CD8-positive, alpha-beta T cell (primary cell): ENCODE measurements at regions of chr17 and their contacts with region 1.

Region 1: DNA sequence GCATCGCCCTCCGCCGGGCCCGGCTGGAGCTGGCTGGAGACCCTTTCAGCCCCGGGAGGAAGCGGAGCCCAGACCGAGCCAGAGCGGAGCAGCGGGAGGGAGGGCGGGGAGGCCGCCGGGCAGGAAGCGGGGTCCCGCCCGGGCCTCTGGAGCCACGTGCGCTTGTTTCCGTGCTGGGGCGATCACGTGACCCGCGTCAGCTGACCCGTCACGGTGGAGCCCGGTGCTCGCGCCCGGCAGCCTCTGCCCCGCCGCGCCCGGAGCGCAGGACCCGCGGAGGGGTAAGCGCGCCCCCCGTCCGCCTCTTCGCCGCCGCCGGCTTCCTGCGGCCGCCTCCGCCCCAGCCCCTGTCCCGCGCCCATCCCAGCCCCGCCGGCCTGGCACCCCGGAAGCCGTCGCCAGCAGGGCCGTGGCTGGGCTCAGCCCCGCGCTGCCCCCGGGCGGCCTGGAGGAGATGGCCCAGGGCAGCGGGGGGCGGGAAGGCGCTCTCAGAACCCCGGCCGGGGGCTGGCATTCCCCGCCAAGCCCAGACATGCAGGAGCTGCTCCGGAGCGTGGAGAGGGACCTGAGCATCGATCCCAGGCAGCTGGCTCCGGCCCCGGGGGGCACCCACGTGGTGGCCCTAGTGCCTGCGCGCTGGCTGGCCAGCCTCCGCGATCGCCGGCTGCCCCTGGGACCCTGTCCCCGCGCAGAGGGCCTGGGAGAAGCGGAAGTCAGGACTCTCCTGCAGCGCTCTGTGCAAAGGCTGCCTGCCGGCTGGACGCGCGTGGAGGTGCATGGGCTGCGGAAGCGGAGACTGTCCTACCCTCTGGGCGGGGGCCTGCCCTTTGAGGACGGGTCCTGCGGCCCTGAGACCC is at the start of gene WDR81:
- DNase-seq: peak; percentile 57 to 94 (median 86)
- ATAC-seq: peak; percentile 71
- H3K4me3 ChIP-seq: peak within 1 kb of the TSS; percentile 57 to 62
- H3K4me3 Mint-ChIP-seq: peak within 1 kb of the TSS; percentile 79
- H3K27ac ChIP-seq: peak within 1 kb of the TSS; percentile 57 to 75
- H3K27ac Mint-ChIP-seq: peak within 1 kb of the TSS; percentile 83
- H3K4me1 ChIP-seq: peaks cover 52% of the 10 kb centered on the region
- H3K4me1 Mint-ChIP-seq: peaks cover 39% of the 10 kb centered on the region
- H3K27me3 ChIP-seq: no peaks in the 10 kb centered on the region
- H3K27me3 Mint-ChIP-seq: no peaks in the 10 kb centered on the region
- CTCF ChIP-seq: no peak
- total RNA-seq, gene WDR81: 18.9 to 20.4 TPM

Region 2: GRCh38 chr17:1648963-1649843 is 75.5 kb before region 1 on chr17:
- CTCF ChIA-PET with region 1: interaction called, 4 read pairs
- POLR2A ChIA-PET with region 1: no interaction called
- intact Hi-C with region 1: loop called in 1 of 2 experiments (anchors 1 kb)
- DNase-seq: peak; percentile 90 to 98 (median 93)
- ATAC-seq: peak; percentile 76
- H3K4me3 ChIP-seq: peak overlapping the region; percentile 34 to 70
- H3K4me3 Mint-ChIP-seq: peak overlapping the region; percentile 74
- H3K27ac ChIP-seq: peak overlapping the region in 1 of 2 experiments; percentile 44
- H3K27ac Mint-ChIP-seq: peak overlapping the region; percentile 49
- H3K4me1 ChIP-seq: peaks cover 16% of the 10 kb centered on the region
- H3K4me1 Mint-ChIP-seq: peaks cover 14% of the 10 kb centered on the region
- H3K27me3 ChIP-seq: no peaks in the 10 kb centered on the region
- H3K27me3 Mint-ChIP-seq: no peaks in the 10 kb centered on the region
- CTCF ChIP-seq: peak; percentile 71

Region 3: DNA sequence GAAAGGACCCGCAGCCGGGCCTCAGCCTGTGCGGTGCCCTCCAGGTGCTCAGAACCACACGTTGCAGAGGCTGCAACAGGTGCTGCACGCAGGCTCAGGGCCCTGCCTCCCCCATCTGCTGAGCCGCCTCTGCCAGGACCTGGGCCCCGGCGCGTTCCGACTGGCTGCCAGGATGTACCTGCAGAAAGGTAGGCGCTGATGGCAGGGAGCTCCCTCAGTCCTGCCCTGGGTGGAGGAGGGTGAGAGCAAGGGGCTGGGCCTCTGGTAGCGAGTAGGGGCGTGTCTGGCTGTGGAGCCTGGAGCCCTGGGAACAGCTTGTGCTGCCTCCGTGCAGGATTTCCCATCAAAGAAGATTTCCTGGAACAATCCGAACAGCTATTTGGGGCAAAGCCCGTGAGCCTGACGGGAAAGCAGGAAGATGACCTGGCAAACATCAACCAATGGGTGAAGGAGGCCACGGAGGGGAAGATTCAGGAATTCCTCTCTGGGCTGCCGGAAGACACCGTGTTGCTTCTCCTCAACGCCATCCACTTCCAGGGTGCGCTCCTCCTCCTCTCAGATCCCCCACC is 22.3 kb after region 1 on chr17:
- CTCF ChIA-PET with region 1: interaction called, 13 read pairs
- POLR2A ChIA-PET with region 1: no interaction called
- intact Hi-C with region 1: no loop called
- DNase-seq: no peak
- ATAC-seq: no peak
- H3K4me3 ChIP-seq: no peak overlapping the region
- H3K4me3 Mint-ChIP-seq: no peak overlapping the region
- H3K27ac ChIP-seq: no peak overlapping the region
- H3K27ac Mint-ChIP-seq: no peak overlapping the region
- H3K4me1 ChIP-seq: peaks cover 2% of the 10 kb centered on the region
- H3K4me1 Mint-ChIP-seq: peaks cover under 1% of the 10 kb centered on the region
- H3K27me3 ChIP-seq: no peaks in the 10 kb centered on the region
- H3K27me3 Mint-ChIP-seq: no peaks in the 10 kb centered on the region
- CTCF ChIP-seq: no peak

Region 4: DNA sequence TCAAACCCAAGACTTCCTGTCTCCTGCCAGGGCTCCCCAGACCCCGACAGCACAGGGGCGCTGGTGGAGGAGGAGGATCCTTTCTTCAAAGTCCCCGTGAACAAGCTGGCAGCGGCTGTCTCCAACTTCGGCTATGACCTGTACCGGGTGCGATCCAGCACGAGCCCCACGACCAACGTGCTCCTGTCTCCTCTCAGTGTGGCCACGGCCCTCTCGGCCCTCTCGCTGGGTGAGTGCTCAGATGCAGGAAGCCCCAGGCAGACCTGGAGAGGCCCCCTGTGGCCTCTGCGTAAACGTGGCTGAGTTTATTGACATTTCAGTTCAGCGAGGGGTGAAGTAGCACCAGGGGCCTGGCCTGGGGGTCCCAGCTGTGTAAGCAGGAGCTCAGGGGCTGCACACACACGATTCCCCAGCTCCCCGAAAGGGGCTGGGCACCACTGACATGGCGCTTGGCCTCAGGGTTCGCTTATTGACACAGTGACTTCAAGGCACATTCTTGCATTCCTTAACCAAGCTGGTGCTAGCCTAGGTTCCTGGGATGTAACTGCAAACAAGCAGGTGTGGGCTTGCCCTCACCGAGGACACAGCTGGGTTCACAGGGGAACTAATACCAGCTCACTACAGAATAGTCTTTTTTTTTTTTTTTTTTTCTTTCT is 45.2 kb after region 1 on chr17:
- CTCF ChIA-PET with region 1: interaction called, 39 read pairs
- POLR2A ChIA-PET with region 1: interaction called, 13 read pairs
- intact Hi-C with region 1: loop called in 1 of 2 experiments (anchors 5 kb)
- DNase-seq: peak in 6 of 9 experiments; percentile 19 to 68 (median 30)
- ATAC-seq: peak; percentile 58
- H3K4me3 ChIP-seq: peak overlapping the region in 1 of 2 experiments; percentile 10
- H3K4me3 Mint-ChIP-seq: peak overlapping the region; percentile 84
- H3K27ac ChIP-seq: peak overlapping the region; percentile 12 to 39
- H3K27ac Mint-ChIP-seq: peak overlapping the region; percentile 94
- H3K4me1 ChIP-seq: peaks cover 29% of the 10 kb centered on the region
- H3K4me1 Mint-ChIP-seq: peaks cover 38% of the 10 kb centered on the region
- H3K27me3 ChIP-seq: no peaks in the 10 kb centered on the region
- H3K27me3 Mint-ChIP-seq: no peaks in the 10 kb centered on the region
- CTCF ChIP-seq: no peak

Region 5: DNA sequence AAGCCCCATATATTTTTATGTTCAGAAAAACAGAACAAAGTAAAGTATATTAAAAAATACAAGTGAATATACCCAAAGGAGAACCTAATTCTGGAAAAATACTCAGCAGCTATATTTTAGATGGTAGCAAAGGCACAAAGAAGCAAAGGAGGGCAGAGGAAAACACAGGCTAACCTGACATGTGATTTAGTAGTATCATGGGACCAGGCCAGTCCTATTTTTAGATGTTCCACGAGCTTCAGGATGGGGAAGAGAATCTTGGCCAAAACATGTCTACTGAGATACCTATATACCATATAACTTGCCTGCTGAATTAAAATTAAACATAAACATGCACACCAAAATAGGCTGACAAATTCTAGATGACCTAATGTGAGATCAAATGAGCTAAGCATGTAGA is 72.1 kb after region 1 on chr17:
- CTCF ChIA-PET with region 1: interaction called, 11 read pairs
- POLR2A ChIA-PET with region 1: interaction called, 5 read pairs
- intact Hi-C with region 1: no loop called
- DNase-seq: no peak
- ATAC-seq: no peak
- H3K4me3 ChIP-seq: no peak overlapping the region
- H3K4me3 Mint-ChIP-seq: no peak overlapping the region
- H3K27ac ChIP-seq: no peak overlapping the region
- H3K27ac Mint-ChIP-seq: peak overlapping the region; percentile 37
- H3K4me1 ChIP-seq: no peaks in the 10 kb centered on the region
- H3K4me1 Mint-ChIP-seq: peaks cover 10% of the 10 kb centered on the region
- H3K27me3 ChIP-seq: no peaks in the 10 kb centered on the region
- H3K27me3 Mint-ChIP-seq: no peaks in the 10 kb centered on the region
- CTCF ChIP-seq: no peak

Region 6: GRCh38 chr17:1865252-1866037 is 140.7 kb after region 1 on chr17:
- CTCF ChIA-PET with region 1: interaction called, 41 read pairs
- POLR2A ChIA-PET with region 1: no interaction called
- intact Hi-C with region 1: loop called (anchors 1 kb)
- DNase-seq: peak; percentile 16 to 74 (median 53)
- ATAC-seq: peak; percentile 70
- H3K4me3 ChIP-seq: no peak overlapping the region
- H3K4me3 Mint-ChIP-seq: no peak overlapping the region
- H3K27ac ChIP-seq: no peak overlapping the region
- H3K27ac Mint-ChIP-seq: no peak overlapping the region
- H3K4me1 ChIP-seq: peaks cover 12% of the 10 kb centered on the region
- H3K4me1 Mint-ChIP-seq: peaks cover 11% of the 10 kb centered on the region
- H3K27me3 ChIP-seq: no peaks in the 10 kb centered on the region
- H3K27me3 Mint-ChIP-seq: no peaks in the 10 kb centered on the region
- CTCF ChIP-seq: peak; percentile 82